ENCODE measurements at regions of chr3 and their contacts with region 1.

Region 1: DNA sequence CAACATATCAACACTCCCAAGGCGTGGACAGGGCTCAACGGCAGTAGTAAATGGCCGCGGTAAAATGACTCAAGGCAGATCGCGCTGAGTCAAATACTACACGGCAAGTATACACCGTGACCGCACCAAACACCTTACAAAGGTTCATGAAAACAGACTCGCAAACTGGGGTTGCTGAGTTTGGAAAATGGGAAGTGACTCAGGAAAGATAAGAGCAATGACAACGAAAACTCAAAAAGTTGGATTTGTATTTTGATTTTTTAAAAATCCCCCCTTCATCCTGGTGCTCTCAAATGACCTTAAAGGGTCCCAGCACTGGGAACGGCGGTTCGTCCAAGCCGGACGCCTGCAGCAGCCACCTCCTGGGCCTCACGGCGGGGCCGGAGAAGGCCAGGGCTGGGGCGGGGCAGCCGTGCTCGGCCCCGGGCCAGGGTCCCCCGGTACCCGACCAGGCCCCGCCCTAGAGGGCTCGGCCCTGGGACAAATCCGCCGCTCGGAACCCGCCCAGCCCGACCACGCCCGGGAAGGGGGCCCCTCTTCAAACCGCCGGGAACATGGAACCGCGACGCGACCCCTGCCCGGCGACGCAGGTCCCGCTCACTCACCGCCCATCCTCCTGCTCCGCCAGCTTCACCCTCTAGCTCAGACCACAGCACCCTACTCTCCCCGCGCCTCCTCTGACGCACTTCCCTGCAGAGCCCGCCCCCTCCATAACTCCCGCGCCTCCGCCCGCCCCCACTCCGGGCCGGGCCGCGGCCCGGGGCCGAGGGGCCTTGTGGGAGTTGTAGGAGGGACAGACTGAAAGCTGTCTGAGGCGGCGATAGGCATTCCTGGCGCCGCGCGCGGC is at the start of gene CLDND1:
- DNase-seq: peak; percentile 98
- H3K4me3 Mint-ChIP-seq: peak within 1 kb of the TSS; percentile 88
- H3K27ac Mint-ChIP-seq: peak within 1 kb of the TSS; percentile 93
- H3K4me1 Mint-ChIP-seq: peaks cover 57% of the 10 kb centered on the region
- H3K27me3 Mint-ChIP-seq: no peaks in the 10 kb centered on the region
- total RNA-seq, gene CLDND1: 279 and 288 TPM in 2 replicates

Region 2: GRCh38 chr3:97764407-97765238 is 757.8 kb before region 1 on chr3 and contains the start of gene ARL6:
- intact Hi-C with region 1: loop called (anchors 1 kb)
- DNase-seq: peak; percentile 92
- H3K4me3 Mint-ChIP-seq: peak within 1 kb of the TSS; percentile 99
- H3K27ac Mint-ChIP-seq: peak within 1 kb of the TSS; percentile 97
- H3K4me1 Mint-ChIP-seq: peaks cover 21% of the 10 kb centered on the region
- H3K27me3 Mint-ChIP-seq: peaks cover 5% of the 10 kb centered on the region
- total RNA-seq, gene ARL6: 6.1 and 6.3 TPM in 2 replicates

Region 3: DNA sequence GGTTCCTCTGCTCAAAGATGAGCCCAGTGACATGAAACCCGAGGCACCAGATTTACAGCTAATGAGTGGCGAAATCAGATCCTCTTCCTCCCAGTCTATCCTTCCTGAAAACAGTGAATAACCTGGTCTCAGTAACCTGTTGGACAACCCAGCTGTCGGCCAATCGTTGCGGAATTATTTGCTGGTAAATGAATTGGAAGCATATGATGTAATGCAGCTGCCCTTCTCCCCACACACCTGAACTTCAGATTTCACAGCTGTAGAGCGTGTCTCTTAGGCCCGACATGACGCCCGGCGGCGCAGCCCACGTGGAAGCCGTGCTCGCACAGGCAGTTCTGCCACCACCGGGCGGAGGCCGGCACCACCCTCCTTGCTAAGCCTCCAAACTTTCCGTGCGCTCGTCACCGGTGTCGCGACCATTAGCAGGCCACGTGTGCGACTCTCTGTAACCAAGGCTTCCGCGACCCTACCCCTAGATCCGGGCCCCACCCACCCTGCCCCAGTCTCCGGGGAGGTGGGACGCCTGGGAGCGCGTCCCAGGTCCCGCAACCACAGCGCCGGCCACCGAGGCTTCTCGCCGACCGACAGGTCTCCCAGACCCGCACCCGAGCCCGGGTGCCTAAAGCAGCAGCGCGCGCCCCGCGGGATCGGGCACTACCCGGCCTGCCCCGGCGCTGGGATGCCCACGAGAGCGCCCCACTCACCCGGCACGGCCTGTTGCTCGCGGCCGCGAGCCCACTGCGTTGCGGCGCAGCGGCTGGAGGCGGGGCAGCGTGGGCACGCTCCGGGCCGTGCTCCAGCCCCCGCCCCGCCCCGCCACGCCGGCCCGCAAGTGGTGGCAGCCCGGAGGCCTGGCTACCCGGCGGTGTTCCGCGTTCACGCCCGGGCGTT is 550.5 kb before region 1 on chr3 and contains the start of gene RIOX2:
- intact Hi-C with region 1: loop called (anchors 5 kb)
- DNase-seq: peak; percentile 94
- H3K4me3 Mint-ChIP-seq: peak within 1 kb of the TSS; percentile 94
- H3K27ac Mint-ChIP-seq: peak within 1 kb of the TSS; percentile 99
- H3K4me1 Mint-ChIP-seq: peaks cover 76% of the 10 kb centered on the region
- H3K27me3 Mint-ChIP-seq: no peaks in the 10 kb centered on the region
- total RNA-seq, gene RIOX2: 84.1 and 87.7 TPM in 2 replicates

Region 4: GRCh38 chr3:98556164-98557130 is 34.0 kb after region 1 on chr3:
- intact Hi-C with region 1: loop called (anchors 1 kb)
- DNase-seq: peak; percentile 94
- H3K4me3 Mint-ChIP-seq: peak overlapping the region; percentile 80
- H3K27ac Mint-ChIP-seq: peak overlapping the region; percentile 93
- H3K4me1 Mint-ChIP-seq: peaks cover 74% of the 10 kb centered on the region
- H3K27me3 Mint-ChIP-seq: no peaks in the 10 kb centered on the region

Region 5: GRCh38 chr3:98573181-98573728 is 50.8 kb after region 1 on chr3:
- intact Hi-C with region 1: loop called (anchors 1 kb)
- DNase-seq: peak; percentile 65
- H3K4me3 Mint-ChIP-seq: peak overlapping the region; percentile 59
- H3K27ac Mint-ChIP-seq: peak overlapping the region; percentile 75
- H3K4me1 Mint-ChIP-seq: peaks cover 49% of the 10 kb centered on the region
- H3K27me3 Mint-ChIP-seq: no peaks in the 10 kb centered on the region

Region 6: GRCh38 chr3:98784666-98785600 is 262.5 kb after region 1 on chr3:
- intact Hi-C with region 1: no loop called
- DNase-seq: no peak
- H3K4me3 Mint-ChIP-seq: no peak overlapping the region
- H3K27ac Mint-ChIP-seq: no peak overlapping the region
- H3K4me1 Mint-ChIP-seq: peaks cover 8% of the 10 kb centered on the region
- H3K27me3 Mint-ChIP-seq: peaks cover 9% of the 10 kb centered on the region